ENCODE measurements at regions of chr9 and their contacts with region 1.

Region 1: DNA sequence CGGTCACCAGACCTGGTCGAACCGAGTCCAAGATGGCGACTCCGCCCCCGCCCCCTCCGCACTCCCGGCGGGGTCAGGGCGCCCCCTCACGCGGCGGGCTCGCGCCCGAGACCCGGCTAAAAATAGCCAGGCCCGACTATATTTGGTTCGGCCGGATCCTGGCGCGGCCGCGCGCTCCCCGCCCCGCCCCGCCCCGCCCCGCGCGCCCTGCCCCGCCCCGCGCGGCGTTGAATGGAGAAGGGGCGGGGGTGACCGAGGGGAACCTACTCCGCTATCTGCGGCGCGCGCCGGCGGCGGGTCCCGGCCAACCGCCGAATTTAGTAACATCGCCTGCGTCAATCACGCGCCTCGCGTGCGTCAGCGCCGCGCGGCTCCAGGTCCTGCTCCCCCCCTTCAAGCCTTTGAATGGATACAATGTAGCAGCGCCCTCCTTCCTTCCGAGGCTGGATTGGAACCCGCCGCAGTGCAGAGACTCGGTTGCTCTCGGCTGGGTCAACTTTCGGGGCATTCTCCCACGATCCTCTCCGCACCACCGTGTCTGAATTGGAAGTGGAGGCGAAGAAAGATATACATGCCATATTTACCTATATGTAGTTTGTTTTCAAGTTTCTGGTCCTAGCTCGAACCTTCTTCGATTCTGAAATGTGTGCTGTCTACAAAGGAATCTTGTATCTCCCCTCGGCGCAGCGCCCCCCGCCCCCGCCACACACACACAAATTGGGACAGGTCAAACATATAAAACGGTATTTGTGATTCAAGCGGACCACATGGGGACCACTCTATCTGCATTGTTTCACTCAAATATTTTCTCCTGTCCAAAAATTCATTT is 1.6 kb upstream of the NR4A3 start:
- DNase-seq: peak; percentile 79
- H3K4me3 Mint-ChIP-seq: peak overlapping the region; percentile 97
- H3K27ac Mint-ChIP-seq: peak overlapping the region; percentile 95
- H3K4me1 Mint-ChIP-seq: peaks cover 63% of the 10 kb centered on the region
- H3K27me3 Mint-ChIP-seq: peaks cover 33% of the 10 kb centered on the region

Region 2: GRCh38 chr9:99184475-99185347 is 635.4 kb before region 1 on chr9:
- intact Hi-C with region 1: loop called (anchors 1 kb)
- DNase-seq: peak; percentile 57
- H3K4me3 Mint-ChIP-seq: no peak overlapping the region
- H3K27ac Mint-ChIP-seq: no peak overlapping the region
- H3K4me1 Mint-ChIP-seq: peaks cover 60% of the 10 kb centered on the region
- H3K27me3 Mint-ChIP-seq: peaks cover 5% of the 10 kb centered on the region

Region 3: DNA sequence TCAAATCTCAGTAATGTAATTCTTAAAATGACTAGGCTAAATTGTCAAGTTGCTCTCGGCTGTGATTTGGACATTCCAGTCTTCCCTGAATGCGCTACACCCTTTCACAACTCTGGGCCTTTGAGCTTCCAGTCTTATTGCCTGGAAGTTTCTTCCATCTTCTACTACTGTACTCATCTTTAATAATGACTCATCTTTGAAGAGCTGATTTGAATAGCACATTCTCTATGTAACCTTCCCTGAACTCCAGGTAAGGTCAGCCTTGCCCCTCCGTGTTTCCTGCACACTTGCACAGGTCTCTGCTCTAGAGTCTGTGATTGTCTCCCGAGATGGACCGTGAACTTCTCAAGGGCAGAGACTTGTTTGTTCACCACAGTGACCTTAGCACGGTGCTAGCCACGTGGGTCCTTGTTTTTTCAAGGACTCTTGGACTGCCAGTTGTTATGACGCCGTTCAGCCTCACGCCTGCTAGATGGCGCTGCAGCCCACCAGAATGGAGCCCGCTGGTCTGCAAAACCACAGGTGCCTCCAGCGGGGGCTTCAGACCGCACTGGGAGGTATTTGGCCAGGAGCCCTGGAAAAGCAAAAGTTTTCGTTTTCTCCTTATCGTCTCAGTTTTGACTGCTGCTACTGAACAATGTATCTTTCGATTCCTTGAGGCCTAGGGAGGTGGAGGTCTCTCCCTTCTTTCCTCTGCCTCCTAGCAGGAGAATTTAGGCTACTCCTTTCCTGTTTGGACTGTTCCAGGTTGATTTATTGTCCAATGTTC is 553.6 kb before region 1 on chr9:
- intact Hi-C with region 1: loop called (anchors 2 kb)
- DNase-seq: peak; percentile 50
- H3K4me3 Mint-ChIP-seq: peak overlapping the region; percentile 3
- H3K27ac Mint-ChIP-seq: no peak overlapping the region
- H3K4me1 Mint-ChIP-seq: peaks cover 14% of the 10 kb centered on the region
- H3K27me3 Mint-ChIP-seq: peaks cover 14% of the 10 kb centered on the region

Region 4: DNA sequence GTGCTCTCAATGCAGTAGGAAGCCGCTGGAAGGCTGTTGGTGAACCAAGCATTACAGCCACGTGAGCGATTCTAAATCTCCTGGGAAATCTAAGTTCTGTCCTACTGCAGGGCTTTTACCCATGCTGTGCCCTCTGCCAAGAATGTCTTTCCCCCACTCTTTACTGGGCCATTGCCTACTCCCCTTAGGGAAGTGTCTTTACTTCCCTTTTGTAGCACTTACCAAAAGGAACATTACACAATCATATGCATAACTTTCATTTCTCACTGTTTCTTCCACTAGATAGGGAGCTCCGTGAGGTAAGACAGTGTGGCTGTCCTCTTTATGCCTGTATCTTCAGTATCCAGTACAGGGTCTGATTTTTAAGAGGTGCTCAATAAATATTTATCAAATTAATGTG is 240.1 kb before region 1 on chr9:
- intact Hi-C with region 1: no loop called
- DNase-seq: no peak
- H3K4me3 Mint-ChIP-seq: no peak overlapping the region
- H3K27ac Mint-ChIP-seq: no peak overlapping the region
- H3K4me1 Mint-ChIP-seq: no peaks in the 10 kb centered on the region
- H3K27me3 Mint-ChIP-seq: peaks cover 3% of the 10 kb centered on the region

Region 5: DNA sequence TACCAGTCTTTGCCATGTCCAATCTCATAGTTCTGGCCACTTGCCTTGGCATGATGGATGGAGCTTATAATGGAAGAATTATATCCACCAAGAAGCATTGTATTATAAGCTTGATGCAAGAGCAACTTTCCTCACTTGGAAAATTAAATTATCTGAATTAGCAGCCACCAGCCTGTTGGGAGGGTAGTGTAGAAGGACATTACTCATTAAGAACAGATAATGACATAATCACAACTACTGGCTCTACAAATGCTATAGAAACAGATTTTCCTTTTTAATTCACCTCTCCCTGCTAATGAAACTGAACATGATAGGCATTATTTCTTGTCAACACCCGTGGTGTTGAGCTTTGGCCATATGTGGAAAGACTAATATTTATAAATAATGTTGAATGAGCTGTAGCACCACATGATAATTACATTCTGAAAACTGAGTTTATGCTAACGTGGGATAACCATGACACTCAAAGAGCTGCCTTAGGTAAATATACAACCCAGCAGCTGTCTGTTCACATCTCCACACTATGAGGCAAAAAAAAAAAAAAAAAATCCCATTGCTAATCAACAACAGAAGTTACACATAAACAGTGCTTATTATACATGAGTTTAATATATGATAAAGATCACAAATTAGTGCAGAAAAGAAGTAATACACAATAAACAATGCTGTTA is 46.5 kb before region 1 on chr9:
- intact Hi-C with region 1: no loop called
- DNase-seq: no peak
- H3K4me3 Mint-ChIP-seq: no peak overlapping the region
- H3K27ac Mint-ChIP-seq: no peak overlapping the region
- H3K4me1 Mint-ChIP-seq: no peaks in the 10 kb centered on the region
- H3K27me3 Mint-ChIP-seq: peaks cover 19% of the 10 kb centered on the region

Region 6: GRCh38 chr9:99906403-99907207 is 86.5 kb after region 1 on chr9 and contains the start of gene STX17:
- intact Hi-C with region 1: loop called (anchors 1 kb)
- DNase-seq: peak; percentile 72
- H3K4me3 Mint-ChIP-seq: peak within 1 kb of the TSS; percentile 96
- H3K27ac Mint-ChIP-seq: peak within 1 kb of the TSS; percentile 96
- H3K4me1 Mint-ChIP-seq: peaks cover 33% of the 10 kb centered on the region
- H3K27me3 Mint-ChIP-seq: peaks cover 13% of the 10 kb centered on the region
- total RNA-seq, gene STX17: 20.5 and 22.1 TPM in 2 replicates

Region 7: DNA sequence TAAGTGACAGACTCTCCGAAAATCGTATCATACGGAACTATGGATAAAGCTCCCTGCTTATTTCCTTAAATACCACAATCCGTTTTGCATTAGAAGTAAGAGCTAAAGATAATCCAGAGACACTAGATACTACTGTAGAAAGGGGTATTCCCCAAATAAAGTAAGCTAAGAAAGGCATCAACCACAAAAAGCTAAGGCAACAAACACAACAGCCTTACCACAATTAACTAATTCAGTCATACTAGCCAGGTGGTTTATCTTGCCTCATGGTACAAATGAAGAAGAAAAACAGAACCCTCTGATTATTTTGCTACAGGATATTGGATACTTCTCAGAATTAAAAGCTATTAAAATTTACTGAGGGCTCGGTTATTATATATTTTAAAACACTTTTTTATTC is 264.7 kb after region 1 on chr9:
- intact Hi-C with region 1: loop called (anchors 1 kb)
- DNase-seq: no peak
- H3K4me3 Mint-ChIP-seq: peak overlapping the region; percentile 23
- H3K27ac Mint-ChIP-seq: no peak overlapping the region
- H3K4me1 Mint-ChIP-seq: peaks cover 64% of the 10 kb centered on the region
- H3K27me3 Mint-ChIP-seq: peaks cover 2% of the 10 kb centered on the region

Region 8: DNA sequence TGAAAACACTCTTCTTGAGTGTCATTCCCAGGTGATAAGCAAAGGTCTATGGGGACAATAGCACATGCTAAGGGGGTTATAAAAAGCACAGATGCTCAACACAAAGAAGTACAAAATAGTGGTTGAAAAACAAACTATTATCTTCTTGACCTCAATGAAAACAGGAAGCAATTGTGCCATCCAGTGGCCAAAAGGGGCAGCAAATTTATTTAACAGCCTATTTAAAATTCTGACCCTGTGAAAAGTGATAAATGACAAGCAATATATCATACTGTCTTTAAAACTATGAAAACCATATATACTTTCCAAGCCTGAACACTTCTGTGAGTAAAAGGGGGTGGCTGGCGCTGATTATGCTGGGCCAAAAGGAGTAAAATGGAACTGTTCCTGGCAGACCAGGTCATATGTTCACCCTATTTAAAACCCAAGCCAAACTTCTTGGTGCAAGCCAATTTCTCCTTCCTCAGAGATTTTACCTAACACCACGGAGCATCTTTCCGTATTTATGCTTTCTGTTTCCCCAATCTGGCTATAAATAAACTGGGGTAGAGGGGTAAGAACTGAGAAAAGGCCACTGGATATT is 503.0 kb after region 1 on chr9:
- intact Hi-C with region 1: loop called (anchors 5 kb)
- DNase-seq: no peak
- H3K4me3 Mint-ChIP-seq: no peak overlapping the region
- H3K27ac Mint-ChIP-seq: no peak overlapping the region
- H3K4me1 Mint-ChIP-seq: peaks cover 5% of the 10 kb centered on the region
- H3K27me3 Mint-ChIP-seq: no peaks in the 10 kb centered on the region

Measured in activated T-helper 1 cell treated with anti-CD3 and anti-CD28 coated beads, Interleukin-12 subunit alpha, Interleukin-12 subunit beta, Interleukin-2, Interleukin-4 antibody, amounts not matched to agents 30 ng/mL and 10 ng/mL and 1 ng/mL, durations not matched to agents 14 hours and 24 hours and 36 hours (primary cell).